Activated CD4-positive, alpha-beta memory T cell treated with anti-CD3 and anti-CD28 coated beads for 36 hours (primary cell): ENCODE measurements at regions of chr3 and their contacts with region 1.

Region 1: GRCh38 chr3:162096874-162097273 is 600.3 kb downstream of the OTOL1 start:
- DNase-seq: no peak
- H3K4me3 Mint-ChIP-seq: no peak overlapping the region
- H3K27ac Mint-ChIP-seq: no peak overlapping the region
- H3K4me1 Mint-ChIP-seq: no peaks in the 10 kb centered on the region
- H3K27me3 Mint-ChIP-seq: no peaks in the 10 kb centered on the region

Region 2: GRCh38 chr3:162122405-162122804 is 25.5 kb after region 1 on chr3:
- CTCF ChIA-PET with region 1: no interaction called
- POLR2A ChIA-PET with region 1: no interaction called
- intact Hi-C with region 1: loop called (anchors 1 kb)
- DNase-seq: no peak
- H3K4me3 Mint-ChIP-seq: no peak overlapping the region
- H3K27ac Mint-ChIP-seq: no peak overlapping the region
- H3K4me1 Mint-ChIP-seq: no peaks in the 10 kb centered on the region
- H3K27me3 Mint-ChIP-seq: no peaks in the 10 kb centered on the region